ENCODE measurements at regions of chr10 and their contacts with region 1.

Region 1: DNA sequence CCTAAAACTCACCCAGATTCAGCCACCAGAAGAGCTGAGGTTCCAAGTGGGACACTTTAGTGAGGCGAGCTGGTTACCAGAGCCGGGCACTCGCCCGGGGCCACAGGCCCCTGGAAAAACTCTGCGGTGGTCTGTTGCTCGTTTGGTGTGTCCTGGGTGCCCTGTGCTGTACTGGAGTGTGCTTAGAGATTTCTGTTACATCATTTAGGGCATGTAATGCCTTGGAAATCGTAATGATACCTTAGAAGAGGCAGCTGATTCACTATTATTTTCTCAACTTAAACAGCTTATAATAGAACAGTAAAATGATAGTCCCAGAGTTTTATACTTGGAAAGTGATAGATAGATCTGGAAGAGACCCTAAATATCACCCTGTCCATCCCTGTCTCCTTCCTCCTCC is 48.5 kb upstream of the BTBD16 start:
- DNase-seq: no peak
- H3K4me3 ChIP-seq: no peak overlapping the region
- H3K27ac ChIP-seq: no peak overlapping the region
- H3K4me1 ChIP-seq: no peaks in the 10 kb centered on the region
- H3K27me3 ChIP-seq: no peaks in the 10 kb centered on the region
- CTCF ChIP-seq: no peak

Region 2: DNA sequence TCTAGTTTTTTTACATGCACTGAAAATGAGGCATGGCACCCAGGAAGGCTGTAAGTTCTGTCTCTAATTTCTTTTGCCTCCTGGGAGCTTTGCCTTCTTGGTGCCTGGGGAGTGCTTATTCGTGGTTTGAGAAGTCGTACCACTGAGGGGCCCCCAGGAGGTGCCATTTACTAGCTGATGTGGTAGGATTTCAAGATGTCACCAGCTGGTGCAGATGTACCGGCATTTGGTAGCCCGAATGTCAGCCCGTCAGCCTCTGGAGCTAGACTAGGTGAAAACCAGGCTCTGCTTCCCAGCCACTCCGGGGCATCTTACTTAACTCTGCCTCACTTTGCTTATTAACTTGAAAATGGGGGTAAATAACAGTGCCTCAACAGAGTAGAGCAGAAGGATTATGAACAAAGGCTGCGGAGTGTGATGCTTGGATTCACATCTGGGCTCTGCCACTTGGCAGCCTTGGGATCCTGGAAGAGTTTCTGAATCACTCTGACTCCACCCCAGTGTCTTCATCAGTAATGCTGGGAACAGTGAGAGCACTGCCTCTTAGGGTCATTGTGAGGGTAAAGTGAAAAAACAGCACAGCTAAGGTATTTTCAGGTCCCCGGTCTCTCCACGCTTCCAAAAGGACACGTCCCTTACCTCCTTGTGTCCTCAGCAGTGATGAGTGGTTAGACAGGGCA is 17.1 kb after region 1 on chr10:
- CTCF ChIA-PET with region 1: interaction called, 19 read pairs
- dilution Hi-C with region 1: no loop called
- in situ Hi-C with region 1: no loop called
- intact Hi-C with region 1: no loop called
- DNase-seq: no peak
- H3K4me3 ChIP-seq: no peak overlapping the region
- H3K27ac ChIP-seq: no peak overlapping the region
- H3K4me1 ChIP-seq: no peaks in the 10 kb centered on the region
- H3K27me3 ChIP-seq: no peaks in the 10 kb centered on the region
- CTCF ChIP-seq: no peak

Measured in mammary epithelial cell (primary cell).